Right ventricle myocardium inferior (tissue), 1 donor: ENCODE measurements at regions of chr17 and their contacts with region 1.

Region 1: DNA sequence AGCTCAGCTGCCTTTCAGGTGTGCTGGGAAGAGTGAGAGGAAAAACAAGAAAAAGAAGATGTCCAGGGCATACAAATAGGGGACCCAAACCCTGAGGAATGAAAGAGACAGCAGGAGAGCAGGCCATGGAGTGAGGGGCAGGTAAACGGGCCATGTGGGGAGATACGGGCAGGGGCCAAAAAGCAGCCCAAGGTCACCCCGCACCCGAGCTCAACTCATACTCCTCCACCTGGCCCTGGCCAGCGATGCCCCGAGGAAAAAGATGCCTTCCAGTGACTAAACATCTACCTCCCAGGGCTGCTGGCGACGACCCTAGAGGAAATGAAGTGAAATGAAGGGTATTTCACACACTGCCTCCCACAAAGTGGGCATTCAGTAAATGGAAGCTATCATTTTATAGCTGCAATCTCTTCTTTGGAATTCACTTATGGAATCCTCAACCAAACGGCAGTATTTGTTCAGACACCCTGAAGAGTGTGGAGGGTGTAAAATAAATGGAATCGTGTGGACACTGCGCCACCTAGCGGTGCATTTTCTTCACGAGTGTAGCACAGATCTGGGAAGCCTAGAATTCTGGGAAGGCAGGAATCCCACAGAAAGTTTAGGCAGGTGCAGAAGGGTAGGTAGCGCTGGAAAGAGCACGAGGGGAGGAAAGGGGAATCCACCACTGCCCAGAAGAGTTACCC is 14.9 kb downstream of the ELAC2 start:
- DNase-seq: no peak
- ATAC-seq: peak; percentile 84

Region 2: DNA sequence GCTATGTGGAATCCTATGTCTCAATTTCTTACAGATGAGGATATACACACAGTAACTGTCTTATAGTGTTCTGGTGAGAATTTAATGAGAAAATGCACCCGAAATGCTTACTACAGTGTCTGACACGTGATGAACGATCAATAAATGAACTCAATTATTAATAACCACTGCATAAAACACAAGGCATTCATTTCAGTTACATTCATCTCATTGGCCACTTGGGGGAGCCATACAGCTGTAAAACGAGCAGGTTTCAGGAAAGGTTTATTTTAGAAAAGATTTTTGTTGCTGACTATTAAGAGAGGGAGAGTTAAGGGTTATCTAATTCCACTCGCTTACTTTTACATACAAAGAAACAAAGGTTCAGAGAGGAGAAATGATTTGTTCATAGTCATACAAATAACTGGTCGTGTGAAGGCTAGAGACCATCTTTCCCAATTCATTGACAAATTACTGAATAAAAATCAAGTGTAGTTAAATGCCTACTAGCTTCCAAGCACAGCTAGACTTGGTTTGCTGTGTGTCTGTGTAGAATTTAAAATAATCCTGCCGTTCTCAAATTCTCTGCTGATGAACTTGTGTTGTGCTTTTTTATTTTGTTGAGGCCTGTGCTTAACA is 822.2 kb before region 1 on chr17:
- intact Hi-C with region 1: loop called (anchors 5 kb)
- DNase-seq: no peak
- ATAC-seq: no peak

Region 3: GRCh38 chr17:12256380-12256995 is 746.4 kb before region 1 on chr17:
- intact Hi-C with region 1: loop called (anchors 10 kb)
- DNase-seq: no peak
- ATAC-seq: peak; percentile 65

Region 4: GRCh38 chr17:12545877-12546513 is 456.9 kb before region 1 on chr17:
- intact Hi-C with region 1: loop called (anchors 10 kb)
- DNase-seq: no peak
- ATAC-seq: peak; percentile 80

Region 5: GRCh38 chr17:12928741-12929140 is 74.2 kb before region 1 on chr17:
- intact Hi-C with region 1: loop called (anchors 5 kb)
- DNase-seq: no peak
- ATAC-seq: no peak